ENCODE measurements at regions of chr6 and their contacts with region 1.

Region 1: GRCh38 chr6:14734416-14735340 is 511.2 kb upstream of the JARID2 start:
- DNase-seq: peak; percentile 55
- ATAC-seq: peak; percentile 37
- H3K4me3 Mint-ChIP-seq: peak overlapping the region; percentile 67
- H3K27ac Mint-ChIP-seq: peak overlapping the region; percentile 100
- H3K4me1 Mint-ChIP-seq: peaks cover 99% of the 10 kb centered on the region
- H3K27me3 Mint-ChIP-seq: no peaks in the 10 kb centered on the region

Region 2: GRCh38 chr6:14423330-14423729 is 311.3 kb before region 1 on chr6:
- CTCF ChIA-PET with region 1: no interaction called
- POLR2A ChIA-PET with region 1: interaction called, 7 read pairs
- intact Hi-C with region 1: loop called (anchors 1 kb)
- DNase-seq: no peak
- ATAC-seq: no peak
- H3K4me3 Mint-ChIP-seq: no peak overlapping the region
- H3K27ac Mint-ChIP-seq: peak overlapping the region; percentile 96
- H3K4me1 Mint-ChIP-seq: peaks cover 54% of the 10 kb centered on the region
- H3K27me3 Mint-ChIP-seq: no peaks in the 10 kb centered on the region

Region 3: GRCh38 chr6:14638906-14639761 is 95.5 kb before region 1 on chr6:
- CTCF ChIA-PET with region 1: no interaction called
- POLR2A ChIA-PET with region 1: no interaction called
- intact Hi-C with region 1: loop called in 1 of 2 experiments (anchors 5 kb)
- DNase-seq: no peak
- ATAC-seq: no peak
- H3K4me3 Mint-ChIP-seq: no peak overlapping the region
- H3K27ac Mint-ChIP-seq: peak overlapping the region; percentile 56
- H3K4me1 Mint-ChIP-seq: peaks cover 65% of the 10 kb centered on the region
- H3K27me3 Mint-ChIP-seq: no peaks in the 10 kb centered on the region

Region 4: DNA sequence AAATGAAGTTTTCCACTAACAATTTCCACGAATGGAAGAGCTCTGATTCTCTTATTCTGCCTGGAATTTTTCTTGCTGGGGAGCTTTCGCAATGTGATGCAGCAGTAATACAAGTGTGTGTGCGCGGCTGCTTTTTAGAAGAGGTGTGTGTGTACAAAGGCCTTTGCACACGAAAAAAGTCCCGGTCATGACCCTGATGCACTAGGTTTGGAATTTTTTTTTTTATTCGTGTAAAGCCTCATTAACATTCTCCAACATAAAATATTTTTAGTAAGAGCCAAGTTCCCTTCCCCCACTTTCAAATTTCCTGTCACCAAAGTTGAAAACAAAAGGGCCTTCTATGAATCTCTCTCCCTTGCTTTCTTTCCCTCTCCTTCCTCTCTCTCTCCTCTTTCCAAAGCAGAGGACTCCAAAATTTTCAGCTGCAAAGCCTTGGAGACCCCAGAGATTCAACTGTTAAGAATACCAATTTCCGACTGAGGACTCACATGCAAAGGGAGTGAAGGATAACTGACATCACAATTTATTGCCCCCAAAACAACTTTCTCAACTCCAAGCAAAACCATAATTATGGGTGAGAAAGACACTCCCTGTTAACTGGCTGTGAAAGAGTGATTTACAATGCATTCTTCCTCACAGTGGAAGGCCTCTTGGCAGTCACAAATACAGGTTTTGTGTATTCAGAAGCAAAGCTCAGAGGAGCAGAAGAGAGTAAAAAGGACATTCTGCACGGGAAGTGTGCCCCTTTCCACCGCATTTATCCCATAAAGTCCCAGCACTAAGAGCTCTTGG is 90.0 kb after region 1 on chr6:
- CTCF ChIA-PET with region 1: no interaction called
- POLR2A ChIA-PET with region 1: no interaction called
- intact Hi-C with region 1: loop called in 1 of 2 experiments (anchors 5 kb)
- DNase-seq: no peak
- ATAC-seq: no peak
- H3K4me3 Mint-ChIP-seq: no peak overlapping the region
- H3K27ac Mint-ChIP-seq: no peak overlapping the region
- H3K4me1 Mint-ChIP-seq: peaks cover 24% of the 10 kb centered on the region
- H3K27me3 Mint-ChIP-seq: no peaks in the 10 kb centered on the region

Region 5: GRCh38 chr6:15023448-15023847 is 288.8 kb after region 1 on chr6:
- CTCF ChIA-PET with region 1: no interaction called
- POLR2A ChIA-PET with region 1: no interaction called
- intact Hi-C with region 1: loop called in 1 of 2 experiments (anchors 1 kb)
- DNase-seq: peak; percentile 85
- ATAC-seq: peak; percentile 98
- H3K4me3 Mint-ChIP-seq: peak overlapping the region; percentile 37
- H3K27ac Mint-ChIP-seq: peak overlapping the region; percentile 89
- H3K4me1 Mint-ChIP-seq: peaks cover 22% of the 10 kb centered on the region
- H3K27me3 Mint-ChIP-seq: no peaks in the 10 kb centered on the region

Region 6: DNA sequence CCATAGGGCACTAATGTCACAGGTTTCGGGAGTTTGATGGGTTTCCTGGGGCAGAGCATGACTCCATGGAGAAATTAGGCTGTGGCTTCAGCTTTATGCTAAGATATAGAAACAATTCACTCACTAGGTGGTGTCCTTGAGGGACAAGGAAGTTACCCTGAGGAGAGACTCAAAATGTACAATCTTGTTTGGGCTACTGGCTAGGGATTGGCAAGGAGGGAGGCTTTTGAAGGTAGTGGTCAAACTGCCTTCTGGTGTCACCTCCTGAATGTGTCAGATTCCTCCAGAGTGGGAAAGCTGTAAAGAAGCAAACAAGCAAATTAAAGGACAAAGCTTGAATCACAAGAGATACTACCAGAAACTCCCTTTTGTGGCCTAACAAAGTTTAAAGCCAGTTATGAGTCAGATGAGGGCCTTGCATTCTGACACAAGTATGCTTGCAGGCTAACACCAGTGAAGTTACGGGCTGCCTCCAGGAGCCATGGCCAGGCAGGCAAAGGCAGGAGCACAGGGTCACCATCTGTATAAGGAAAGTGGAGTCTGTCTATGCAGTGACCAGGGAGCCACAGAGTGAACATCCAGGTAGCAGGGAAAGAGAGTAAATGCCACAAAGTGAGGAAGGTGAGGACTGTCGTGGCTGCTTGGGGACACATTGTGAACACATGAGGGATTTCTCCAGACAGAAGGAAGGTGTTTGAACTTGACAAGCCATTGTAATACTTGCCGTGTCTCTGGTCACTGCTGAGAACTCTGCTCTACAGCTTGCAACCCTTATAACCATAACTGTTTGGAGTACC is 1035.9 kb after region 1 on chr6:
- CTCF ChIA-PET with region 1: no interaction called
- POLR2A ChIA-PET with region 1: no interaction called
- intact Hi-C with region 1: loop called in 1 of 2 experiments (anchors 10 kb)
- DNase-seq: peak; percentile 46
- ATAC-seq: peak; percentile 87
- H3K4me3 Mint-ChIP-seq: no peak overlapping the region
- H3K27ac Mint-ChIP-seq: peak overlapping the region; percentile 92
- H3K4me1 Mint-ChIP-seq: peaks cover 46% of the 10 kb centered on the region
- H3K27me3 Mint-ChIP-seq: no peaks in the 10 kb centered on the region

Measured in activated CD4-positive, alpha-beta T cell treated with anti-CD3 and anti-CD28 coated beads for 36 hours (primary cell).